CD4-positive, alpha-beta T cell (primary cell): ENCODE measurements at regions of chr19 and their contacts with region 1.

Region 1: DNA sequence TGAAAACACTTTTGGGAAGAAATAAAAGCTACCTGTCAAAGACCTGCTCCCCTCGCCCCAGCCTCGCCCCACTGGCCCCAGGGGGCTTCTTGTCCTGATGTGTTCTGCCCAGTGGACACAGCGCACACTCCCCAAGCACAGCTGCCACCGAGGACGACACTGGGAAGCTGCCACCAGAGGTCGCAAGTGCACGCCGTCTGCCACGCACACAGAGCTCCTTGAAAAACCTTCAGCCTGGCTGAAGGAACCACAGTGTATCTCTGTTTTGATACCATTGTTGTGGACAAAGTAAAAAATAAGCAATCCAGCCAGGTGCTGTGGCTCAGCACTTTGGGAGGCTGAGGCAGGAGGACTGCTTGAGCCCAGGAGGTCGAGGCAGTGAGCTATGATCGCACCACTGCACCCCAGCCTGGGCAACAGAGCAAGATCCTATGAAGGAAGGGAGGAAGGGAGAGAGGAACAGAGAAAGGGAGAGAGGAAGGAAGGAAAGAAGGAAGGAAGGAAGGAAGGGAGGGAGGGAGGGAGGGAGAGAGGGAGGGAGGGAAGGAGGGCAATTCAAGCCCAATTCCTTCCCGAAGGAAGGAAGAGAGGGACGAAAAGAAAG is 57.3 kb downstream of the CEBPG start:
- DNase-seq: peak; percentile 46 to 83 (median 58)
- ATAC-seq: peak; percentile 74
- H3K4me3 ChIP-seq: no peak overlapping the region
- H3K4me3 Mint-ChIP-seq: peak overlapping the region; percentile 64
- H3K27ac ChIP-seq: no peak overlapping the region
- H3K27ac Mint-ChIP-seq: peak overlapping the region; percentile 91
- H3K4me1 ChIP-seq: peaks cover 22% of the 10 kb centered on the region
- H3K4me1 Mint-ChIP-seq: peaks cover 19% of the 10 kb centered on the region
- H3K27me3 ChIP-seq: no peaks in the 10 kb centered on the region
- H3K27me3 Mint-ChIP-seq: no peaks in the 10 kb centered on the region
- CTCF ChIP-seq: peak; percentile 70

Region 2: DNA sequence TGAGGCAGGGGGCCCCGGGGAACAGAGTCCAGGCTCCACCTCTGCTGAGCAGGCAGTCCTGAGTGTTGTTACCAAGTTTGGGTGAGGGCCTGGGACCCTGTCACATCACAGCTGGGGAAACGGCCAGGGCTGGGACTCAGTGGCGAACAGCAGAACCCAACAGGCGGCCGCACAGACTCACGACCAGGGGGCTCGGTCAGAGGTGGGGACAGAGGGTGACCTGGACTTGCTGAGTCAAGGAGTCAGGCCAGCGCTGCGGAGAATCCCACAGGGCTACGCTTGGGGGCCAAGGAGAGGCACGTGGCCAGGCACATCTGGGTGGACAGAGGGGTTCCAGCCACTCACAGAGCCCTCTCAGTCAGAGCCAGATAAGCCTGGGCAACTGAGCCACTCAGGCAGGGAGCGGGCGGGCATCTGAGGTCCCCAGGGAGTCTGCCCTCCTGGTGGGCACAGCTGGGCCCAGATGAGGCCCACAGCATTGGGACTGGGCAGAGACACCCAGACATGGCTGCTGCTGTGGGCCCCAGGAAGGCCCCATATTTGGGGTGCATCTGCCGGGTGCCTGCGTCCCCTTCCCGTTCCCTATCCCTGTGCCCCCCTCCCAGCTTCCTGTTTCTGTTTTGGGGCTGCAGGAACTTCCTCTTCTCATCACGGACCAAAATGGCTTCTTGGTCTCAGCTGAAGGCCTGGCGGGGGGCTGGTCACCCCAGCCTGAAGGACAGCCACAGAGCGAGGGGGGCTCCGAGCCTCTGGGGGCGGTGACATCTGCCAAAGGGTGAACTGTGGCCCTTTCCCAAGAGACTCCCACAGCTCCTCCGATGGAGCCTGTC is 162.4 kb before region 1 on chr19:
- CTCF ChIA-PET with region 1: no interaction called
- POLR2A ChIA-PET with region 1: no interaction called
- intact Hi-C with region 1: no loop called
- DNase-seq: peak in 1 of 14 experiments; percentile 33
- ATAC-seq: no peak
- H3K4me3 ChIP-seq: no peak overlapping the region
- H3K4me3 Mint-ChIP-seq: no peak overlapping the region
- H3K27ac ChIP-seq: no peak overlapping the region
- H3K27ac Mint-ChIP-seq: no peak overlapping the region
- H3K4me1 ChIP-seq: peaks cover 10% of the 10 kb centered on the region
- H3K4me1 Mint-ChIP-seq: no peaks in the 10 kb centered on the region
- H3K27me3 ChIP-seq: no peaks in the 10 kb centered on the region
- H3K27me3 Mint-ChIP-seq: peaks cover 13% of the 10 kb centered on the region
- CTCF ChIP-seq: no peak

Region 3: DNA sequence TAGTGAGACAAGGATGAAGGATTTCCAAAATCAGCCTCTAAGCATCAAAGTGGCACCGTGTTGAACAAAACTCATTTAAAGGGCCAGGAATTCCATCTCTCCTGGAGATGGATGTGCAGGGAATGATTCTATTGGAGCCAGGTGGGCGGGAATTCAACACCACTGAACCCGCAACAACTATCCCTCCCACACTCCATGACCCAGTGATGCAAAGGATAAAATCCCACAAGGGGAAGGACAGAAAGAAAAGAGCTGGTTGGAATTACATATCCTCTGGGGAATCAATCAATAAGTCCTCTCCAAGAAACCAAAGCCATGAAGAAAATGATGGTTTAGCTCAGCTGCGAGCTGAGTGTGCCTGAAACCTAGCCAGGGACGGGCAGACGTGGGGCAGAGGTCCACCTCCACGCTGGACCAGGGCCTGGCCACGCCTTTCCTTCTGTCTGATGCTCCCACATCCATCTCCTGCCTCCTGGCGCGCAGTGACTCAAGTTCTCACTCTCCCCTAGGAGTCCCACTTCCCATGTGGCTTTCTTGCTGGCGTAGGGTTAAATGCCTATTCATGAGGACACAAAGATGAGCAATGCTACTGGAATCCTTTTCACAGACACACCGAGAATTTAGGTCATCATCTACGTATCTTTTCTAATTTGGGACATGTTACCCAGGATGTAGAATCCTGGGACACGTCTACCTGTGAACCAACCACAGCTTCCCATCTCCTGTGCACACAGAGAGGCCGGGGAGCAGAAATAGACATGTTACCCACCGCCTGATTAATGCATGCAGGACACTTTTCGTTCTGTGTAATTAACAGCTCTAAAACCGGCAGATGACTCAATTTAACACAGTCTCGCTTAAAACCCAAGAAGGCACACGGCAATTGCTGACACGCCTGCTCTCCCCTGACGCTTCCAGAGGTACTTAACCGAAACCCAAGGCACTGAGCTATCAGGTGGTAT is 42.2 kb after region 1 on chr19:
- CTCF ChIA-PET with region 1: no interaction called
- POLR2A ChIA-PET with region 1: no interaction called
- intact Hi-C with region 1: no loop called
- DNase-seq: no peak
- ATAC-seq: no peak
- H3K4me3 ChIP-seq: no peak overlapping the region
- H3K4me3 Mint-ChIP-seq: no peak overlapping the region
- H3K27ac ChIP-seq: no peak overlapping the region
- H3K27ac Mint-ChIP-seq: no peak overlapping the region
- H3K4me1 ChIP-seq: no peaks in the 10 kb centered on the region
- H3K4me1 Mint-ChIP-seq: peaks cover 13% of the 10 kb centered on the region
- H3K27me3 ChIP-seq: no peaks in the 10 kb centered on the region
- H3K27me3 Mint-ChIP-seq: no peaks in the 10 kb centered on the region
- CTCF ChIP-seq: no peak

Region 4: GRCh38 chr19:34096020-34096915 is 665.5 kb after region 1 on chr19:
- CTCF ChIA-PET with region 1: no interaction called
- POLR2A ChIA-PET with region 1: no interaction called
- intact Hi-C with region 1: loop called in 1 of 2 experiments (anchors 10 kb)
- DNase-seq: peak in 3 of 14 experiments; percentile 40 to 57 (median 53)
- ATAC-seq: no peak
- H3K4me3 ChIP-seq: no peak overlapping the region
- H3K4me3 Mint-ChIP-seq: no peak overlapping the region
- H3K27ac ChIP-seq: no peak overlapping the region
- H3K27ac Mint-ChIP-seq: no peak overlapping the region
- H3K4me1 ChIP-seq: no peaks in the 10 kb centered on the region
- H3K4me1 Mint-ChIP-seq: peaks cover 5% of the 10 kb centered on the region
- H3K27me3 ChIP-seq: peaks cover 0 to 6% of the 10 kb centered on the region in 2 experiments
- H3K27me3 Mint-ChIP-seq: peaks cover 24% of the 10 kb centered on the region
- CTCF ChIP-seq: peak; percentile 66